Activated naive CD4-positive, alpha-beta T cell treated with anti-CD3 and anti-CD28 coated beads, Interleukin-2, amount 10 ng/mL, durations not matched to agents 7 days and 5 days (primary cell): ENCODE measurements at regions of chr1 and their contacts with region 1.

Region 1: DNA sequence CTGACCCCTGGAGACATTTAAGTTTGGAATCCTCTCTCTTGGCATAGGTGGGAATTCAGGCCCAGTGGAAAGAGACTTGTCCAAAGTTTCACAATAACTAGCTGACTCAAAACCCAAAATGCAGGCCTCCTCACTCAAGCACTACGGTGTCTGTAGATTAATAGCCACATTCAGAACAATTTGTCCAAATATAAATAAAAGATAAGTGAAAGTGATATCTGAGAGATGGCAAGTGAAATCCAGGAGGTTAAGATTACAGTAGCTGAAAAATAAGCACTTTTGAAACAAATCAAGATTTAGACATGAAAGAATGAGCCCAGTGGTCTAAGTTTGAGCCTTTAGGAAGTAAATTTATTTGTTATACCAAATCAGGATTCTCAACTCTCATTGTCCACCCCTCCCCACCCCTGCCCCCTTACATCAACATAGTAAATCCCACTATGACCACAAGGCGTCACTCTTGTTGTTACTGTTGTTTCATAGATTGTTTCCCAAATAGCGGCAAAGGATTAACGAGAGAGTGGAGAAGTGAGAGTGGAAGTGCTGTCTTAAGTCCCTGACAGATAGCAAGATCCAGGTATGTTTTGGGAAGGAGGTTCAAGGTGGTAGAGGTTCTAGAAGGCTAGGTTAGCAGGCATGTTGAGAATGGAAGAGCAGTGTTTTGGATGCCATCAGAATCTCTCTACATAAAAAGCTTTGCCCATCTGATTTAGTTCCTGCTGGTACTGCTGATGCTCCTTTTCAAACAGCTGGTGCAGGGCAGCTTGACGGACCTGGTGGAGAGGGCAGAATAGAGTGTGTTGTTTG is 7.1 kb upstream of the TPM3 start:
- DNase-seq: peak; percentile 54
- H3K4me3 Mint-ChIP-seq: no peak overlapping the region
- H3K27ac Mint-ChIP-seq: no peak overlapping the region
- H3K4me1 Mint-ChIP-seq: no peaks in the 10 kb centered on the region
- H3K27me3 Mint-ChIP-seq: peaks cover 17% of the 10 kb centered on the region

Region 2: GRCh38 chr1:154148807-154149206 is 50.2 kb before region 1 on chr1:
- CTCF ChIA-PET with region 1: no interaction called
- DNase-seq: no peak
- H3K4me3 Mint-ChIP-seq: no peak overlapping the region
- H3K27ac Mint-ChIP-seq: no peak overlapping the region
- H3K4me1 Mint-ChIP-seq: peaks cover 7% of the 10 kb centered on the region
- H3K27me3 Mint-ChIP-seq: no peaks in the 10 kb centered on the region

Region 3: GRCh38 chr1:154220071-154220969 is 21.4 kb after region 1 on chr1 and contains the start of gene UBAP2L:
- CTCF ChIA-PET with region 1: interaction called, 16 read pairs
- DNase-seq: peak; percentile 99
- H3K4me3 Mint-ChIP-seq: peak within 1 kb of the TSS; percentile 94
- H3K27ac Mint-ChIP-seq: peak within 1 kb of the TSS; percentile 98
- H3K4me1 Mint-ChIP-seq: peaks cover 69% of the 10 kb centered on the region
- H3K27me3 Mint-ChIP-seq: no peaks in the 10 kb centered on the region

Region 4: DNA sequence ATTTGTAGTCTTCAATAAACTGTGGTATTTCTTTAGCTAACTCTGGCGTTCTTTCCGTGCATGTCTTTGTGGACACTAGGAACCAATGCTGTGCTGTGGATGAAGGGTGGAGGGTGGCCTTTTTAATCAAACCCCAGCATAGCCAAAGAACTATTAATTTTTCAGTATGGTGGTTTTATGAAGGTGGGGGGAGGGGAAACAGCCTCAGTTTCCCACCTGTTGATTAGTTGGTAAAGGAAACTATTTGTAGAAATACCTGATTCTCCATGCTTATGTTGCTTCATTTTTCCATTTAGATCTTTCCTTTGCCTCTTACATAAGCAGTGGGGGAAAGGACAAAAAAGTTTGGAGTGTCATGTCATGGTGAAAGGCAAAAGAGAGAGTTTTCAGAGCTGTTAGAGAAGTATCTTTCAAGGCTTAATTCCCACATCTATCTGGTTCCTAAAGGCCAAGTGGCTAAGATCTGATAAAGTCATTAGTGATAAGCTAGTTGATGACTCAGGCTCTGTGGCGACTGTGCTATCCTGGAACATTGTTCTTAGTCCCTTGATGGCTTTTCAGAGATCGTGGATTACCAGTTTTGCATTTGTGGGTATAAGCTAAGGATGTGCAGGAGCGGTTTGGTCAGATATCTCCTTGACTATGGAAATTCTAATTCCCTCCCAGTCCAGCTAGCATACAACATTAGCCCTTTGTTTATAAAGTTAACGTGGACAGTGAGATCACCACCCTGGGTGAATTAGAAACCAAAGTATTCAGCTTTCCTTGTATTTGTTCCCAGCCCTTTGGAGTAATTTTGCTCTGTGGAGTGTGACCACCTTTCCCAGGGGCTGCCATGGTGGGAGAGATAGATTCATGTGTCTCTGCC is 64.7 kb after region 1 on chr1:
- CTCF ChIA-PET with region 1: interaction called, 63 read pairs
- DNase-seq: no peak
- H3K4me3 Mint-ChIP-seq: no peak overlapping the region
- H3K27ac Mint-ChIP-seq: peak overlapping the region; percentile 66
- H3K4me1 Mint-ChIP-seq: peaks cover 35% of the 10 kb centered on the region
- H3K27me3 Mint-ChIP-seq: no peaks in the 10 kb centered on the region

Region 5: DNA sequence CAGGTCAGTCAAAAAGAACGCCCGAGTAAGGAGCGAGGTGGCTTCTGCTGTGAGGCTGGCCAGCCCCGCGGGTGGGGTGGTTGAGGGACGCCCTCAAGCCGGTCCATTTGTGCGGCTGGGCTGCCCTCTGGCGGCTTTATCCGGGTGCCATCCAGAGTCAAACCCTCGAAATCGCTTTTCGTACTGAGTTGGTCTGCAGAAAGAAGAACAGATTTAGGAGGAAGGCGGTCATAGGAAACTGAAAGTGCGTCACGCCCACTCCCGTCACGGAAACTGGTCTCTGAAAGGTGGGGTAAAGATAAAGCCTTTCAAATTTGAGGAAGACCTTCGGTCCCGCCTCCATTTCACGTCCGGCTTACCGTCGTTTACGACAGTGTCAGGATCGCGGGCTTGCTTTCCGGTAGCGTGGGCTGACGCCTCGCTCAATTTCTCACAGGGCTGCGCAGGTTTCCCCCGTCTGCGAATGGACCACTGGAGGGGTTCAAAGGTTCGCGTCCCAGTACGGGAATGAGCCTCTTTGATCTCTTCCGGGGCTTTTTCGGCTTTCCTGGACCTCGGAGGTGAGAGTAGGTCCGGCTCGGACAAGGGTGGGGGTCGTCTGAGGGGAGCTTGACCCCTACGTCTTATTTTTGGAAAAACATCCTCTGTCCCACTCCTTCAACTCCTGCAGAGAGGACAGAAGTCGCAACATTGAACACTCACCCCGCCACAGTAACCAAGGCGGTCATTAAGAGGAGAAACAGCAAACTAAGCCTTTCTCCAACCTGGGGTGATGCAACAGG is 73.4 kb after region 1 on chr1 and contains the start of gene HAX1:
- CTCF ChIA-PET with region 1: interaction called, 63 read pairs
- DNase-seq: peak; percentile 98
- H3K4me3 Mint-ChIP-seq: peak within 1 kb of the TSS; percentile 96
- H3K27ac Mint-ChIP-seq: peak within 1 kb of the TSS; percentile 97
- H3K4me1 Mint-ChIP-seq: peaks cover 37% of the 10 kb centered on the region
- H3K27me3 Mint-ChIP-seq: no peaks in the 10 kb centered on the region

Region 6: DNA sequence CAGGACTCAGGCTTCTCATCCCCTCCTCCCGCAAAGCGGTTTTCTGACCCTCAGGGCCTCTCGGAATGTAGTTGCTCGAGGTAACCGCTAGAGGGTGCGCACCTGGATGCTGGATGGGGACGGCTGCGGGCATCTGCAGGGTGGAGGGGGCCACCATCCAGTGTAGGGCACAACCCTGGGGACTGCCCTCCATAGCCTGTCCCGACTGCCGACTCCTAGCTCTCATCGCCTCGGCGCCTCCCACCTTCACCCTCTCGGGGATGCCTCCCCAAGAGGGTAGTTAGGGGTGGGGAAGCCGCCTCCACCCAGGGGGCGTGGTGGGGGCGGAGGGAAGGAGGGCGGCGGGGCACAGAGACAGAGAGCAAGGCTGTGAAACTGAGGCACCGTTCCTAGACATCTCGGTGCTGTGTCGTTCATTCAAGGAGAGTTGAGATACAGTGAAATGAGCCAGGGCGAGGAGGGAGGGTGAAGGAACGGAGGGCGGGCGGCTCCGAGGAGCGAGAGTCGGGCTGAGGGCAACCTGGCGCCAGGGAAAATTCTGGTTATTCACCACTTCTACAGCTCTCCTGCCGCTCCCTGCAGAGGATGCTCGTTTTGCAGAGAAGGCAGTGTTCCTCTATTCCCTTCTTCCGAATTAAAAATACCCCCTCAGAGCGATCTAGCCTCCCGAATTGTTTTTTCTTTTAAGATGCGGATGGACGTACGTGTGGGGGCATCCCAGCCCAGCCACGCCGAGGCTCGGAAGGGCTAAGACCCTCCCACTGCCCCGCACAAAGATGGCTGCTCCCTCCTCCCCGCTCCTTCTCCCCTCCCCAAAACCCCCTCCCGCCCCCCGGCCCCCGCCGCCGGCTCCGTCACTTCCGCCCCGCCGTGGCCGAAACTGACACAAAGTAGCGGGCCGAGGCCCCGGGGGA is 126.0 kb after region 1 on chr1 and contains the start of gene ATP8B2:
- CTCF ChIA-PET with region 1: interaction called, 10 read pairs
- DNase-seq: peak; percentile 86
- H3K4me3 Mint-ChIP-seq: peak within 1 kb of the TSS; percentile 91
- H3K27ac Mint-ChIP-seq: peak within 1 kb of the TSS; percentile 90
- H3K4me1 Mint-ChIP-seq: peaks cover 38% of the 10 kb centered on the region
- H3K27me3 Mint-ChIP-seq: peaks cover 46% of the 10 kb centered on the region

Region 7: DNA sequence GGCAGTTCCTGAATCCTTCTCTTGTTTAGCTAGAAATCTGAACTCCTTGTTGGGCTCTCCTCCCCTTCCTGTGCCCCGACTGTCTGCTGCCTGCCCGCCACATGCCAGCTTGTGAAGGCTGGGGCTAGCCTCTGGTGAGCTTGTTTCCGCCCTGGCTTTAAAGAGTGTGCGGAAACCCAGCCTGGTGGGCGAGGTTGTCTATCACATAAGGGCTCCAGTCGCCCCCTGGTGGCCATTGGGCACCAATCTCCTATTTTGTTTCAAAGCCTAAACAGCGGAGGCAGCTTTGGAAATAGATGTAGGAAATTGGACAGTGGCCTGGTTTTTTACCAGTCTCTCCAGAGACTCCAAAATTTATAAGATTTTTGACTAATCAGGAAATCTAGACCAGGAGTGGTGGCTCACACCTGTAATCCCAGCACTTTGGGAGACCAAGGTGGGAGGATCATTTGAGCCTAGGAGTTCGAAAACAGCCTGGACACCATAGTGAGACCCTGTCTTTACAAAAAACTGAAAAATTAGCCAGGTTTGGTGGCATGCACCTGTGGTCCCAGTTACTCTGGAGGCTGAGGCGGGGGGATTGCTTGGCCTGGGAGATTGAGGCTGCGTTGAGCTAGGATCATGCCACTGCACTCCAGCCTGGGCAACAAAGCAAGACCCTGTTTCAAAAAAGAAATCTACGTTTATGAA is 136.2 kb after region 1 on chr1:
- CTCF ChIA-PET with region 1: interaction called, 43 read pairs
- DNase-seq: peak; percentile 95
- H3K4me3 Mint-ChIP-seq: peak overlapping the region; percentile 58
- H3K27ac Mint-ChIP-seq: peak overlapping the region; percentile 89
- H3K4me1 Mint-ChIP-seq: peaks cover 94% of the 10 kb centered on the region
- H3K27me3 Mint-ChIP-seq: no peaks in the 10 kb centered on the region